ENCODE measurements at regions of chr6 and their contacts with region 1.

Region 1: GRCh38 chr6:12011276-12012076 is 636 bp upstream of the HIVEP1 start:
- DNase-seq: peak; percentile 93
- ATAC-seq: peak; percentile 62
- H3K4me3 ChIP-seq: peak overlapping the region; percentile 91
- H3K27ac ChIP-seq: peak overlapping the region; percentile 86
- H3K4me1 ChIP-seq: peaks cover 37% of the 10 kb centered on the region
- H3K27me3 ChIP-seq: no peaks in the 10 kb centered on the region
- CTCF ChIP-seq: no peak

Region 2: GRCh38 chr6:11685152-11686093 is 326.1 kb before region 1 on chr6:
- CTCF ChIA-PET with region 1: no interaction called
- POLR2A ChIA-PET with region 1: no interaction called
- intact Hi-C with region 1: loop called (anchors 5 kb)
- DNase-seq: peak; percentile 95
- ATAC-seq: peak; percentile 85
- H3K4me3 ChIP-seq: peak overlapping the region; percentile 17; the same call in 1 of the 2 replicates
- H3K27ac ChIP-seq: peak overlapping the region; percentile 65
- H3K4me1 ChIP-seq: peaks cover 47% of the 10 kb centered on the region
- H3K27me3 ChIP-seq: no peaks in the 10 kb centered on the region
- CTCF ChIP-seq: no peak

Region 3: GRCh38 chr6:11722805-11723631 is 288.5 kb before region 1 on chr6:
- CTCF ChIA-PET with region 1: no interaction called
- POLR2A ChIA-PET with region 1: interaction called, 15 read pairs
- intact Hi-C with region 1: no loop called
- DNase-seq: no peak
- ATAC-seq: no peak
- H3K4me3 ChIP-seq: no peak overlapping the region
- H3K27ac ChIP-seq: no peak overlapping the region
- H3K4me1 ChIP-seq: no peaks in the 10 kb centered on the region
- H3K27me3 ChIP-seq: no peaks in the 10 kb centered on the region
- CTCF ChIP-seq: no peak

Region 4: DNA sequence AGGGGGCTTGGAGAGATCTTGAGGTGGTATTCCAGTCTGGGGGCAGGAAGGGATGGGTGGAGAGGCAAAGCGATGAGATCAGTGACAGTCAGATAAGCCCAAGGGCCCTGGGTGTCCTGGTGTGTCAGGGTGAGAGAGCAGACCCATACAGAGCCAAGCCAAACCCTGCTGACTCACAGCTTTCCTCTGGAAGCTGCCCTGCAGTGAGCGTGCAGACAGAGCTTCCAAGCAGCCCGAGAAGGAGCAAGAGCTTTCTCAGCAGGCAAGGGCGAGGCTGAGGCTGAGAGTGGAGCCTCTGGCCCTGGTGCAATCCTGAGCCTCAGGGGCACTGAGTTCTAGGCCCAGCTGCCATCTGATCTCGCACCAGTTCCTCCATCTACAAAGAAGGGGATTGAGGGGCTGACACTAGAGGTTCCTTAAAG is 90.4 kb before region 1 on chr6:
- CTCF ChIA-PET with region 1: interaction called, 14 read pairs
- POLR2A ChIA-PET with region 1: interaction called, 3 read pairs
- intact Hi-C with region 1: no loop called
- DNase-seq: peak; percentile 90
- ATAC-seq: peak; percentile 100
- H3K4me3 ChIP-seq: no peak overlapping the region
- H3K27ac ChIP-seq: peak overlapping the region; percentile 60
- H3K4me1 ChIP-seq: peaks cover 24% of the 10 kb centered on the region
- H3K27me3 ChIP-seq: no peaks in the 10 kb centered on the region
- CTCF ChIP-seq: no peak

Region 5: GRCh38 chr6:12348530-12349511 is 337.3 kb after region 1 on chr6:
- CTCF ChIA-PET with region 1: no interaction called
- POLR2A ChIA-PET with region 1: no interaction called
- intact Hi-C with region 1: loop called (anchors 10 kb)
- DNase-seq: peak; percentile 96
- ATAC-seq: peak; percentile 97
- H3K4me3 ChIP-seq: peak overlapping the region; percentile 10; the same call in 1 of the 2 replicates
- H3K27ac ChIP-seq: peak overlapping the region; percentile 85
- H3K4me1 ChIP-seq: peaks cover 38% of the 10 kb centered on the region
- H3K27me3 ChIP-seq: no peaks in the 10 kb centered on the region
- CTCF ChIP-seq: no peak